ENCODE measurements at regions of chr12 and their contacts with region 1.

Region 1: GRCh38 chr12:93569656-93570551 is 2.6 kb upstream of the SOCS2 start:
- DNase-seq: peak; percentile 90

Region 2: GRCh38 chr12:93591137-93591868 is 21.4 kb after region 1 on chr12:
- intact Hi-C with region 1: loop called (anchors 1 kb)
- DNase-seq: peak; percentile 91

Region 3: GRCh38 chr12:93742110-93742934 is 172.4 kb after region 1 on chr12:
- intact Hi-C with region 1: loop called (anchors 1 kb)
- DNase-seq: peak; percentile 87

Region 4: GRCh38 chr12:93785262-93786010 is 215.5 kb after region 1 on chr12:
- intact Hi-C with region 1: loop called (anchors 2 kb)
- DNase-seq: no peak

Region 5: GRCh38 chr12:93894391-93895088 is 324.6 kb after region 1 on chr12:
- intact Hi-C with region 1: loop called (anchors 1 kb)
- DNase-seq: peak; percentile 92

Region 6: DNA sequence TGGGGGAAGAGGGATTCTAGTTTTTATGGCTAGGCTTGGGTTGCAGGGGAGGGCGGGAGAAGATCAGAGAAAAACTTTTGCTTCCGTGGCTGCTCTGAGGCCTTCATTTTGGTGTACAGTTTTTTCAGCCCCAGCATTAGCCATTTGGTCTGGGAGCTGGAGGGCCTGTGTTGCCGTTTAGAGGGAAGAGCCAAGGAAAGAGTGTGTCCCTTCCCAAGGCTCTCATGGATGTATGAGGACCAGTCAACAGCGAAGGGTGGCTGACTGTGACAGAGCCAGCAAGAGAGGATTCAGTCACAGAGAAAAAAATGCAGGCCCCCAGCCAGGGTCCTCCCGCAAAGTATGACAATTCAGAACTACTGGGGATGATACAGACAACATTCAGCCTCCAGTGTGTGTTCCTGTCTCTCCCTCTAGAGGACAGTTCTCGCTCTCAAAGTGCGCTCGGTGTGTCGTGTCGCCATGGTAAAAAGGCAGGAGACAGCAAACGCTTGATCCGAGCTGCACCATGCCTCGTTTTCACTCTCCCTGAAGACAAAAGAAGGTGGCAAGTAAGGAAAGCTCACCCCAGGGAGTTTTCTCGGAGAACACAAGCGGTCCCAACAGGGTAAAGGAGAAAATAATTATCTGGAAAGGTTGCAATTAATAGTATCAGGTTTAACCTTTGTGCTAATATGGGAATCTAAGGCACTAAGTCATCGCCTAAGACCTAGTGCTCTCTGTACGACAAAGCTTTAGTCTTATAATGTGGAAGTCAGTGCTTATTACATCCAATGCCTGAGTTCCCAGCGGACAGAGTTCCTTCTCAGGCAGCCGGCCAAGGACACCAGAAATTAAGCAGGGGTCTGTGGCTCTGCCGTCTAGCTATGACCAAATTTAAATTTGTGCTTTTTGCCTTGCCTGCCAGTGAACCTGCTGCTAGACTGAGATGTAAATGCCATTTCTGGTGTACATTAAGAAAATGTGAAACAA is 421.2 kb after region 1 on chr12:
- intact Hi-C with region 1: loop called (anchors 5 kb)
- DNase-seq: no peak

Region 7: DNA sequence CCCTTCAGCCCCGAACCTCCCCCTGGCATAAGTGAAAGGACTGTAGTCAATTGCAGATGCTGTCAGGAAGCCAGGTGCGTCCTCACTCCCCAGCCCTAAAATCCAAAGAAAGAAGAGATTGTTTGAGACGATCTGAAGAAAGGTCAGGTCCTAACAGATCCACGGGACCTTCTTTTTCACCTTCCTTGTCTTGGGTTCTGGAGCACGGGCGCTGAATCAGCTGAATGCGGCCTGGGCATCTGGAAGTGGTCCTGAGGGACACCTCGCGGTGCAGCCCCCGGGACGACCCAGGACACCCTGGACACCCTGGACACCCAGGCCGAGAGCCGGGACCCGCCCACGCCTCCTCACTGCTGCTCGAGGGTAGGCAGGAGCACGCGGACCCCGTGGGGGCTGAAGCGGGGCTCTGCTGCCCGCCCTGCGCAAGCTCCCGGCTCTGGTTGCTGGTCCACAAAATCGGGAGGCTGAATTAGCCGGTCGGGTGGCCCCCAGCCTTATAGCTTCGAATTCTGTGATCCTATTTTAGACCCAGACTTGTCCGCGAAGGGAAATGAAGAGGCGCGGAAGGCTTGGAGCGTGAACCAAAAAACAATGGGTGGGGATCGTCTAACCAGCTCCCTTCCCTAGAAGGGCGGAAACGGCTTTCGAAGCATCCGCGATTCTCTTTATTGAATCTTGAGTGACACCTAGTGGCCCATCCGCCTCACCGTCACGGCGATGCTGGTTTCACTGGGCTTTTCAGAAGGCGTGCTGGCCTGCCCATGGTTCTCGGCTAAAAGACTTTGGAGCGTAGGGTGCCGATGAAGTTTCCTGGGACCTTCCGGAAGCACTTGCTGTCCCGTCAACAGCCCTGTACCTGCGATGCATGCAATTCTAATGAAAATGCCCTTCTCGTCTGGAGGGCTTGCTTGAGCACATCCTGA is 532.1 kb after region 1 on chr12:
- intact Hi-C with region 1: loop called (anchors 1 kb)
- DNase-seq: peak; percentile 91